ENCODE measurements at regions of chr12 and their contacts with region 1.

Region 1: DNA sequence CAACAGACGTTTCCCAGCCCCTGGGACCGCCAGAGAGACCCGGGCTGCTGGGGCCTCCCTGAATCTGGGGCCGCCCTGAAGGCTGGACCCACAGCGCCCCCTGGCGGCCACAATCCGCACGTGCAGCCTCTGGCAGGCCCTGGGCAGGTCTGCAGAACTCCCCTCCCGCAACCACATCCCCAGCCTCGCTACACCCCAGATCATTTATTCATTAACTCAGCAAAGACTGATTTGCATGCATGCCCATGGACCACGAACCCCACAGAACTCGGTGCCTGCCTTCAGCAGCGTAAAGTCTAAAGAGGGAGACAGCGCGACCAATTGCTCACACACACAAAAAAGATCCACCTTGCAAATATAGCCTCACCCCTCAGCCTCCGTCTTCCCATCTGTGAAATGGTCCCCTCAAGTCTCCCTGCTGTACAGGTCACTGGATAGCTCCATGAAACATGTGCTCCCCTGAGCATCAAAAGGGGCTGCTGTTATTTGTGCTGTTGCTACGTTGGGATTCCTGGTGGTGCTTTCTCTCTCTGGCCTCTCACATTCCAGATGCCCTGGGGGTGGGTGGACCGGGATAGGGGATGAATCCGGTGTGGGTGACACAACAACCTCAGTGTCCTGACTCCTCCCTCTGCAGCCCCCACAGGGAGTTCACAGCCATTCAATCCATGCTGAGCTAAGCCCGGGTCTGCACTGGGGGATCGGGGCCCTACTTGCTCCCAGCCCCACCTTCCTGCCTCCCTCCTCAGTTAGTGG is 96.4 kb downstream of the SCARB1 start:
- DNase-seq: peak; percentile 80 to 84
- ATAC-seq: peak; percentile 72 to 84
- H3K4me3 ChIP-seq: no peak overlapping the region
- H3K27ac ChIP-seq: peak overlapping the region; percentile 33 to 86; a peak in 5 of 6 replicates
- H3K4me1 ChIP-seq: peaks cover 42% of the 10 kb centered on the region
- CTCF ChIP-seq: peak; percentile 97
- EP300 ChIP-seq: no peak
- POLR2A ChIP-seq: no peak
- RAD21 ChIP-seq: peak; percentile 98 to 99

Region 2: DNA sequence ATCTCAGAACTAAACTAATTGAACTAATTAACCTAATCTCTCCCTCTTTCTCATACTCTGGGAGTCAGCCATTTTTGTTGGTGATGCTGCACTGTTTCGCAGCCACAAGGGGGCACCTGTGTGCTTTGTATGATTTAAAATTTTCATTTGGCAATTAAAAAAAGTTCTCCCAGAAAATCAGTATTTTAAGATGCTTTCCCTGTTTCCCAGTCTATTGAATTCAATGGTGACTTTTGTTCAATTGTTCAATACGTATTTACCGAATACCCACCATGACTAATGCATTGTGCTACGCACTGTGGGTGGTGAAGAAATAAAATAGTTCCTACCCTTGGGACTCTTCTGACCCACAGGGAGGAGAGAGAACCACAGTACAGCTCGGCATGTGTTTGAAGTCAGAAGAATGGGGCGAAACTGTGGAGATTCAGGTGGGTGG is 730.6 kb before region 1 on chr12:
- CTCF ChIA-PET with region 1: interaction called, 93 read pairs
- POLR2A ChIA-PET with region 1: no interaction called
- DNase-seq: peak; percentile 33 to 56
- ATAC-seq: peak; percentile 45 to 72; a peak in 4 of 6 replicates
- H3K4me3 ChIP-seq: no peak overlapping the region
- H3K27ac ChIP-seq: peak overlapping the region in 1 of 2 experiments; percentile 27; a peak in 2 of 6 replicates
- H3K4me1 ChIP-seq: no peaks in the 10 kb centered on the region
- CTCF ChIP-seq: peak; percentile 98
- EP300 ChIP-seq: no peak
- POLR2A ChIP-seq: no peak
- RAD21 ChIP-seq: peak; percentile 96 to 97

Region 3: DNA sequence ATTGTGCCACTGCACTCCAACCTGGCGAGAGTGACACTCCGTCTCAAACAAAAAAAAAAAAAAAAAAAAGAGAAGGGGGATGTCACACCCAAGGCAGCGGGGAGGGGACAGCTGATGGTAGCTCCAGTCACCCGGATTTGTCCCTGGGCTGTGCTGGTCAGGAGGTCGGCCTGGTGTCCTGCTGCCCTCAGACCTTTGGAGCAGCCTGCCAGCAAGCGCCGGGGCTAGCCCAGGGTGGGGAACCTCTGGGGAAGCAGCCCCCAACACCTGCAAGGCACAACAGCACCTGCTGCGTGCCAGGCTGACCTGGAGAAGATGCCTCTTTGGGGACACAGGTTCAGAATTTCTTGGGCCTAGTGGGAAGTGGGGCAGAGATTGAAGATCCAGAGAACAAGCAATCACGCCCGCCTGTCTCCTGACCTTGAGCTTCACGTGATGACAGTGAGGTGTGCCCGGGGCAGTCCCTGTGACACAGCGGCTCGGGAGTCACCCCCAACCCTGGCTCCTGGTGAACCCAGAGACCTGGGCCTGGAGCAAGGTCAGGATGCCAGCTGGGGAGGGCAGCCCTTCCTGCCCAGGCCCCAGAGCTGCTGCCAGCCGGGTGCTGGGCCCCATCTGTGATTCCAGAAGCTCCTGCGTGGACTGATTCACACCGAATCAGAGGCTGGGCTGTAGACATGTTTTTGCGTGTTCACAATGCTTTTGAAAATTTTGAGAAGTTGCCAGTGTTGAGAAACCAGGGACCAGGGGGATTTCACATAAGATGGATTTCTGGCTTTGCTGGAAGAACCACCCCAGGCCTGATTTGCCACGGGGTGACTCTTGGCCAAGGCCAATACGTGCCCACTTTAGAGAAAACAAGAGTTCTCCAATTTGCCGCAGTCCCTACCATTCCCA is 405.9 kb before region 1 on chr12:
- CTCF ChIA-PET with region 1: interaction called, 11 read pairs
- POLR2A ChIA-PET with region 1: no interaction called
- DNase-seq: no peak
- ATAC-seq: no peak
- H3K4me3 ChIP-seq: no peak overlapping the region
- H3K27ac ChIP-seq: peak overlapping the region in 1 of 2 experiments; percentile 92; a peak in 3 of 6 replicates
- H3K4me1 ChIP-seq: peaks cover 40% of the 10 kb centered on the region
- CTCF ChIP-seq: no peak
- EP300 ChIP-seq: no peak
- POLR2A ChIP-seq: no peak
- RAD21 ChIP-seq: no peak

Region 4: DNA sequence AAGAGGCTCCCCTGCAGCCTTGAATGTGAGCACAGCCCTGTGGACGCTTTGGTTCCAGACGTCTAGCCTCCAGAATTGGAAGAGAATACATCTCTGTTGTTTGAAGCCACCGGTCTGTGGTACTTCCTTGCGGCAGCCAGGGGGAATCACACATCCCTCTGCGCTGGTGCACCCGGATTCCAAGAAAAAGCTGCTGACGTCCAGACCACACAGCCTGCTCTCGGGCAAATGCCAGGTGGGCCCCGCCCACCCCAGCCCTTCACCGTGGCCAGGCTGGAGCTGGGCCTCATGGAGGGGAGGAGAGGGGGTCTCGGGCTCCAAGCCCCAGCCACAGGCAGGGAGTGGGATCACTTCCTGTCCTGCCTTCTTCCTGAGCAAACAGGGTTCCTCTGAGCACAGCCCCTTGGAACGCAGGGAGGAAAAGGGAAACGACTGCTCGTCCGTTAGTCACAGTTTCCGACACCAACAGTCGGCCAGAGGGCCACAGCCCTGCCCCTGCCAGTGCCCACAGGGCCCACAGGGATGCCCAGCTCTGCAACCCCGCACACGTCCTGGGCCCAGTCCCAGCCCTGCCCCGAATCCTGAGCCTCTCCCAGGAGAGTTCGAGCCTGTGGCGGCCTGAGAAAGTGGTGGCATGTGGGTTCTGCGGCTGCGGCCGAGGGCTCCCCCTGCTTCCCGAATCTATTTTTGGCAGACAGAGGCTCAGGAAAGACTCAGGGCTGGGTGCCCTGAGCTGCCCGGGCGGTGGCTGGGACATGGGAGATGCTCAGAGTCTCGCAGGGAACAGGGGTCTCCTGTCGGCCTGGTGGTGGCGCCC is 387.1 kb before region 1 on chr12:
- CTCF ChIA-PET with region 1: interaction called, 44 read pairs
- POLR2A ChIA-PET with region 1: no interaction called
- DNase-seq: peak; percentile 73 to 85
- ATAC-seq: peak; percentile 57 to 59
- H3K4me3 ChIP-seq: no peak overlapping the region
- H3K27ac ChIP-seq: peak overlapping the region; percentile 99 to 100
- H3K4me1 ChIP-seq: peaks cover 100% of the 10 kb centered on the region
- CTCF ChIP-seq: peak; percentile 11; the same call in 1 of the 3 replicates
- EP300 ChIP-seq: peak; percentile 43 to 78; a peak in 2 of 5 replicates
- POLR2A ChIP-seq: no peak
- RAD21 ChIP-seq: peak; percentile 9 to 34; a peak in 3 of 5 replicates

Region 5: DNA sequence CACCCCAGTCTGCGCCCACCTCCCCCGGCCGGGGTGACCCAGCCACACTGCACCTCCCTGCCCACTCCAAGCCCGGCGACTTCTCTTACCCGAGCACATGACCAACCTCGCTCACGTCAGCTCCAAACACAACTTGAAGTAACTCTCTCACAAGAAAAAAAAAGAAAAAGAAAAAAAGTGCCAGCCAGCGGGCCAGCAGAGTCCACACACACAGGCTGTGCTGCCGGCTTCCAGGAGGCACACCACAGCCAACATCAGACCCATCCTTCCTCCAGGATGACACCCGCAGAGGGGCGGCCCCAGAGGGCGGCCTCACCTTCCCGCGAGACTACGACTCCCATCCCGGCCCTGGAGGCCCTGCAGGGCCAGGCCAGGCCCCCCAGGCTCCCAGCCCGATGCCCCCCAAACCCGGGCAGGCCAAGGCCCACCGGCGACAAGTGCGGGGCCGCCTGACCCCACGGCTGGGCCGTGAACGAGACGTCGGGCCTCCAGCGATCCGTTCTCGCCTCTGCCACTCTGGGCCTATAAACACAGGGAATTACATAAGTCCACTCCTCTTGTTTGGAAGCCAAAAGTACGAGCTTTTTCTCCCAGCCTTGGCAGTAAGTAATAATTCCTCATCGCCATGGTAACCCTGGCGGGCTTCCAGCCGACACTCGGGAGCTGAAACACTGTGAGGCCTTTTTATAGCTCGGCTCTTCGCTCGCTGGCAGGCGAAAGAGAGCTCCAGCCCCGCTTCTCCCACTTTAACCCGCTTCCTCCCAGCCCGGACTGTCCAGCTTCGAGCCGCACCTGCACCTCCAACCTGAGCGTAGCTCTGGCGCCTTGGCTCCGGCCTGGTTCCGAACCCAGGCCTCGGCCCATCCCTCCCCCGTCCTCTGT is 249.0 kb before region 1 on chr12:
- CTCF ChIA-PET with region 1: interaction called, 16 read pairs
- POLR2A ChIA-PET with region 1: no interaction called
- DNase-seq: peak; percentile 98
- ATAC-seq: peak; percentile 88 to 90
- H3K4me3 ChIP-seq: peak overlapping the region; percentile 46
- H3K27ac ChIP-seq: peak overlapping the region; percentile 88 to 91
- H3K4me1 ChIP-seq: peaks cover 54% of the 10 kb centered on the region
- CTCF ChIP-seq: no peak
- EP300 ChIP-seq: no peak
- POLR2A ChIP-seq: no peak
- RAD21 ChIP-seq: peak in 1 of 2 experiments; percentile 7; a peak in 1 of 5 replicates

Region 6: DNA sequence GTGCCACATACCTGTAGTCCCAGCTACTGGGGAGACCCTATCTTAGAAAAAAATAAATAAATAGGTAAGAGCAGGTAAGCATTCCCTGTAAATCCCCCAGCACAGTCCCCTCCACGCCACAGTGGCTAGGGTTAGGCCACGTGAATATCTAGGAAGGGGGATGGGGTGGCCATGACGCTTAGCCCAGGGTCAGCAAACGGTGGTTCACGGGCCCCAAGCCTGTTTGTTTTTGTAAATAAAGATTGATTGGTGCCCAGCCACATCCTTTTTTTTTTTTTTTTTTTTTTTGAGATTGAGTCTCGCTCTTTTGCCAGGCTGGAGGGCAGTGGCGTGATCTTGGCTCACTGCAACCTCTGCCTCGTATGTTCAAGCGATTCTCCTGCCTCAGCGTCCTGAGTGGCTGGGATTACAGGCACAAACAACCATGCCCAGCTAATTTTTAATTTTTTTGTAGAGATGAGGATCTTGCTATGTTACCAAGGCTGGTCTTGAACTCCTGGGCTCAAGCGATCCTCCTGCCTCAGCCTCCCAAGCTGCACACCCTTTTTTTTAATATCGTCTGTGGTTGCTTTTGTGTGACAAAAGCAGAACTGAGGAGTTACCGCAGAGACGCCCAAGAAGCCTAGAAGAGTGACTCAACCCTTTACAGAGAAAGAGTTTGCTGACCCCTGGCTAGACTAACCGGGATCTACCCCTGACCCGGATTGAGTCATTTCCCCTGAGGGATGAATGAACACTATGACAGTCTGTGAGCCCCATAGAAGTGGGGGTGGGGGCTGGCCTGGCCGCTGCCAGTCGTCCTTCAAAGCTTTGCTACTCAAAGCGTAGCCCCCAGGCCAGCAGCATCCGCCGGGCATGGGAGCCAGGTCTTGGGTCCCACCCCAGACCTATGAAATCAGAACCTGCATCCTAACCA is 86.1 kb before region 1 on chr12:
- CTCF ChIA-PET with region 1: interaction called, 19 read pairs
- POLR2A ChIA-PET with region 1: no interaction called
- DNase-seq: peak; percentile 95 to 98
- ATAC-seq: peak; percentile 82 to 86
- H3K4me3 ChIP-seq: no peak overlapping the region
- H3K27ac ChIP-seq: peak overlapping the region; percentile 87 to 96
- H3K4me1 ChIP-seq: peaks cover 71% of the 10 kb centered on the region
- CTCF ChIP-seq: peak; percentile 44; the same call in 2 of the 3 replicates
- EP300 ChIP-seq: peak; percentile 64 to 67; a peak in 3 of 5 replicates
- POLR2A ChIP-seq: no peak
- RAD21 ChIP-seq: peak; percentile 73 to 79

Region 7: GRCh38 chr12:125100551-125101434 is 333.5 kb after region 1 on chr12:
- CTCF ChIA-PET with region 1: no interaction called
- POLR2A ChIA-PET with region 1: no interaction called
- DNase-seq: peak; percentile 21 to 42
- ATAC-seq: peak in 1 of 2 experiments; percentile 64; a peak in 3 of 6 replicates
- H3K4me3 ChIP-seq: no peak overlapping the region
- H3K27ac ChIP-seq: peak overlapping the region; percentile 14 to 71; a peak in 4 of 6 replicates
- H3K4me1 ChIP-seq: peaks cover 16% of the 10 kb centered on the region
- CTCF ChIP-seq: no peak
- EP300 ChIP-seq: no peak
- POLR2A ChIP-seq: no peak
- RAD21 ChIP-seq: no peak